A549 (cell line): ENCODE measurements at regions of chr2 and their contacts with region 1.

Region 1: DNA sequence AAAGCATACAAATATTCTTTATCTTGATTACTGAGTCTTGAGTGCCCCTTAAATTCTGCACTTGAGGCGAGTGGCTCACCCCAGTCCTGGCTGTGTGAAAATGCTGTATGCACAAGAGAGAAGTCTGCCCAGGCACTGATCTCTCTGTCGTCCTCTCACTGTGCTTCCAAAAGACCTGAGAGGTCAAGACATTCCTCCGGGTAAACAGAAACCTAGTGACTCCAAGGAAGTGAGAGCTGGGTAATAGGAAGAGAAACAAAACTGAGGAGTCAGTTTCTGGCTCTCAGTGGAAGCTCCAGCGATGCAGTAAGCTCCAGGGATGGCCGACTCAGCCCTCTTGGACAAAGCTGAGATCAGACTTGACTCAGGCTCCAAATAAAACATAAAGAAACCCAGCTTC is 70.9 kb downstream of the AAK1 start:
- DNase-seq: no peak
- ATAC-seq: peak in 1 of 2 experiments; percentile 22; a peak in 2 of 6 replicates
- H3K4me3 ChIP-seq: no peak overlapping the region
- H3K27ac ChIP-seq: peak overlapping the region in 1 of 2 experiments; percentile 9; a peak in 2 of 6 replicates
- H3K4me1 ChIP-seq: peaks cover 46% of the 10 kb centered on the region
- CTCF ChIP-seq: no peak
- EP300 ChIP-seq: no peak
- POLR2A ChIP-seq: no peak
- RAD21 ChIP-seq: no peak

Region 2: DNA sequence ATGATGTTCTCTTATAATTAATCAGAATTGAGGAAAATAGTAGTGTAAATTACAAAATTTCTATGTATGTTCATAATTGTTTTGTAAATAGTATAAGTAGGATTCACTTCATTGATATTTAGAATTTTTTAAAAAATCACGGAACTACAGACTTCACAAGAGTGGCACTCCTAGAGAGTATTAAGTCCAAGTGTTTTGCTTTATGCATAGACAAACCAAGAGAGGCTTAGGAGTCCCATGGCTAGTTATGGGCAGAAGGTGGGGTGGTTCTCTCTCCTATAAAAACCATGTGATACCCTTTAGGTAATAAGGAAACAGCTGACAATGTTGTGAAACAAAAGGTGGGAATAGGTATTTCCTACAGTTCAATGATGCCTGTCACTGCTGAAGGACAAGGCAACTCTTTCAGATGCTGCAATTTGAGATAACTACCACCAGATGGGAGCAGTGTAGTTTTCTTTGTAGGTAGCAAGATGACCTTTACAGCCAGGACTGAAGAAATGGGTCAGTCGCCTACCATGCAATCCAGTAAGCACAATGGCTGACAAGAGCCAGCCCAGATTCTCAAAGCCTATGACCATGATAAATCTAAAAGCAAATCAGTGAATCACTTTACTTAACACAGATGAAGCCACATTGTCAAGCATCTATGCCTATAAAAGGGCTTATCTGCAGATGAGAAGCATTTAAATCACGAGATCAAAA is 13.0 kb before region 1 on chr2:
- CTCF ChIA-PET with region 1: interaction called, 26 read pairs
- POLR2A ChIA-PET with region 1: no interaction called
- DNase-seq: peak; percentile 72 to 84
- ATAC-seq: peak; percentile 93 to 96
- H3K4me3 ChIP-seq: no peak overlapping the region
- H3K27ac ChIP-seq: 0 out of 6 replicates have a peak overlapping the region, but pooled peaks of 1 of the 2 experiments have one; percentile 4
- H3K4me1 ChIP-seq: peaks cover 12% of the 10 kb centered on the region
- CTCF ChIP-seq: peak; percentile 92
- EP300 ChIP-seq: no peak
- POLR2A ChIP-seq: no peak
- RAD21 ChIP-seq: peak; percentile 96 to 97